CD4-positive, alpha-beta memory T cell (primary cell): ENCODE measurements at regions of chr5 and their contacts with region 1.

Region 1: DNA sequence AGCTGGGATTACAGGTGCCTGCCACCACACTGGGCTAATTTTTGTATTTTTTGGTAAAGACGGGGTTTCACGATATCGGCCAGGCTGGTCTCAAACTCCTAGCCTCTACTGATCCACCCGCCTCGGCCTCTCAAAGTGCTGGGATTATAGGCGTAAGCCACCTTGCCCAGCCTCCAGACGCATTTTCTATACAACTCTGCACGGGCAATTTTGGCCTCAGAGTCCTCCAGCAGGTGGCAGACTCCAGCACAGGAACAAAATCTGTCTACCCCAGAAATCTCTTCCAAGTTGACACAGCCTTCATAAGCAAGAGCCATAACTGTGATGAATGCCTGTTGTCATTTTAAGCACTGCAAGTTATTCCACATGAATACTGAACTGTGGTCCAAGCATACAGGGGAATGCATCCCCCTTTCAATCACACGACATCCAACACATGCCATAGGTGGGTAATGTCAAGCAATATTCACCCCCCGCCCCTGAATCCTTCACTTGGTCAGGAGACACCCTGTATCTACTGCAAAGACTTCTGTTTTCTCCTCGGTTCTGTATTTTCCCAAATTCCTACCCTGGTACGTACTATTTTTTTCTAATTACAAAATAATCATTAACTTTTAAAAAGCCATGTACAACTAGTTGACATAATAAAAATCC is 50.8 kb downstream of the ALDH7A1 start:
- DNase-seq: peak in 4 of 5 donors; percentile 7 to 22 (median 20)
- H3K4me3 ChIP-seq: no peak overlapping the region
- H3K4me3 Mint-ChIP-seq: no peak overlapping the region
- H3K27ac ChIP-seq: no peak overlapping the region
- H3K27ac Mint-ChIP-seq: no peak overlapping the region
- H3K4me1 ChIP-seq: no peaks in the 10 kb centered on the region
- H3K4me1 Mint-ChIP-seq: no peaks in the 10 kb centered on the region
- H3K27me3 ChIP-seq: no peaks in the 10 kb centered on the region
- H3K27me3 Mint-ChIP-seq: peaks cover 1 to 3% of the 10 kb centered on the region in 2 donors

Region 2: DNA sequence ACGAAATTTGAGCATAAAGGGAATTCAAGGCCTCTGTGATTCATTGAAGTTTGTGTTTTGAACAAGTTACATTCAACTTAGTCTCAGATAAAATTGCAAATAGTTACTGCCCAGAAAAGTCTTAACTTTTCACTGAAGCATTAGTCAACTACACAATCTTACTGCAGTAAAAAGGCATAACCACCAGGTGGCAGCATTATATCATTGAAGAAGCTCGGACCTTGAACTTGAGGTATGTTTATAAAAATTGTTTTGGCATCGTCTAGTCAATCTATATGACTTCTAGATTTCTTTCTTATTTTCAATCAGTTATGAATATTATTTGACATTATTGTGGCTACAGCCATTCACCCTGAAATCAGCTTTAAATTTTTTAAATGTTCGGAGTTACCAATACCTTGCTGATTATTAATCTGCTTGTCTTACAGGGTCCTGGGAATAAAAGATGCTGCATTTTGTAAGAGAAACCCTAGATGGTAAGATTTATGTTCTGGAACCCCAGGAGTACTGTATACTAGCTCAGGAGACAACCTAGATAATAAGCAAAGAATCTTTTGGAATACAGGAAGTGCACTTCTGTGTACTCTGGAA is 204.9 kb before region 1 on chr5:
- CTCF ChIA-PET with region 1: interaction called, 145 read pairs
- POLR2A ChIA-PET with region 1: no interaction called
- intact Hi-C with region 1: loop called (anchors 1 kb)
- DNase-seq: peak; percentile 56 to 66 (median 58)
- H3K4me3 ChIP-seq: no peak overlapping the region
- H3K4me3 Mint-ChIP-seq: no peak overlapping the region
- H3K27ac ChIP-seq: no peak overlapping the region
- H3K27ac Mint-ChIP-seq: no peak overlapping the region
- H3K4me1 ChIP-seq: no peaks in the 10 kb centered on the region
- H3K4me1 Mint-ChIP-seq: no peaks in the 10 kb centered on the region
- H3K27me3 ChIP-seq: no peaks in the 10 kb centered on the region
- H3K27me3 Mint-ChIP-seq: peaks cover 9 to 21% of the 10 kb centered on the region in 2 donors

Region 3: DNA sequence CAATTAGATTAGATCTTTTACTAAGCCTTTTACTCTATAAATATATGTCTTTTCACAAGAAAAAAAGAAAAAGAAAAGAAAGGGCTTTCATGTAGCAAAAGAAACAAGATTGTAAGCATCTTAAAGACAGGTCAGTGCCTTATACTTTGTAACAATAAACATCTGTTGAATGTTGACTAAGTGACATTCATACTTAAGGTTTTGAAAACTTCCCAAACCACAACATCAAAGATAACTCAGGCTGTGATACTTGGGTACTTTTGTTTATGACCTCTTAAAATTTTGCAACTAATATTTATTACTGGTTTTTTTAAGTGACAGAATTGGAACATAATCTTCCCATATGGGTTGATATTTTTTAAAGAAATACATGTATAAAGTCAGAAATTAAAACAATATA is 113.6 kb before region 1 on chr5:
- CTCF ChIA-PET with region 1: no interaction called
- POLR2A ChIA-PET with region 1: no interaction called
- intact Hi-C with region 1: no loop called
- DNase-seq: no peak
- H3K4me3 ChIP-seq: no peak overlapping the region
- H3K4me3 Mint-ChIP-seq: no peak overlapping the region
- H3K27ac ChIP-seq: no peak overlapping the region
- H3K27ac Mint-ChIP-seq: no peak overlapping the region
- H3K4me1 ChIP-seq: no peaks in the 10 kb centered on the region
- H3K4me1 Mint-ChIP-seq: peaks cover 5 to 9% (median 8%) of the 10 kb centered on the region in 4 donors
- H3K27me3 ChIP-seq: no peaks in the 10 kb centered on the region
- H3K27me3 Mint-ChIP-seq: no peaks in the 10 kb centered on the region

Region 4: DNA sequence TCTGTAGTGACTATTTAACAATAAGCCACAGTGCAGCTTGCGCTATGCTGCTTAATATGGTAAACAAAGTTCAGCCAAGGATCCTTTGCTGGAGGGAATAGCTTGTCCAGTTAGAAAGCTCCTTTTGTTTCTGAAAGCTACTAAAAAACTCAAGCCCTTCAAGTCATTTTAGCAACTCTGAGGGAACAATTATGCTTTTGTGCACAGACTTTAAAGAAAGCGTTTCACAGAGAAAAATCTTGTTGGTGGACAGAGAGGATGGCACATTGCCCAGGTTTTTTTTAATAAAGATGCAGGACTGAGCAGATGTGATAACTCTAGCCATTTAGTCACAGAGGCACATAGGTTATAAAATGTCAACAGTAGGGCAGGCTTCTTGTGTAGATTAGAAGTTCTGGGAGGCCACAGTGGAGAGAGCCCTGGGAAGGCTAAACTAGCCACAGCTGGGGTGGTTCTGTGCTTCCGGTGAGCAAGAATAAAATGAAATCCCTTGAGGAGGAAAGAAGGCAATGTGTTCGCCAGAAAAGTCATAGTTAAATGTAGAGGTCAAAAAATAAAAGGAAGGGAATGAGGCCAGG is 12.6 kb before region 1 on chr5:
- CTCF ChIA-PET with region 1: interaction called, 10 read pairs
- POLR2A ChIA-PET with region 1: no interaction called
- intact Hi-C with region 1: no loop called
- DNase-seq: no peak
- H3K4me3 ChIP-seq: no peak overlapping the region
- H3K4me3 Mint-ChIP-seq: no peak overlapping the region
- H3K27ac ChIP-seq: no peak overlapping the region
- H3K27ac Mint-ChIP-seq: peak overlapping the region in 1 of 7 donors; percentile 63
- H3K4me1 ChIP-seq: no peaks in the 10 kb centered on the region
- H3K4me1 Mint-ChIP-seq: no peaks in the 10 kb centered on the region
- H3K27me3 ChIP-seq: no peaks in the 10 kb centered on the region
- H3K27me3 Mint-ChIP-seq: no peaks in the 10 kb centered on the region

Region 5: DNA sequence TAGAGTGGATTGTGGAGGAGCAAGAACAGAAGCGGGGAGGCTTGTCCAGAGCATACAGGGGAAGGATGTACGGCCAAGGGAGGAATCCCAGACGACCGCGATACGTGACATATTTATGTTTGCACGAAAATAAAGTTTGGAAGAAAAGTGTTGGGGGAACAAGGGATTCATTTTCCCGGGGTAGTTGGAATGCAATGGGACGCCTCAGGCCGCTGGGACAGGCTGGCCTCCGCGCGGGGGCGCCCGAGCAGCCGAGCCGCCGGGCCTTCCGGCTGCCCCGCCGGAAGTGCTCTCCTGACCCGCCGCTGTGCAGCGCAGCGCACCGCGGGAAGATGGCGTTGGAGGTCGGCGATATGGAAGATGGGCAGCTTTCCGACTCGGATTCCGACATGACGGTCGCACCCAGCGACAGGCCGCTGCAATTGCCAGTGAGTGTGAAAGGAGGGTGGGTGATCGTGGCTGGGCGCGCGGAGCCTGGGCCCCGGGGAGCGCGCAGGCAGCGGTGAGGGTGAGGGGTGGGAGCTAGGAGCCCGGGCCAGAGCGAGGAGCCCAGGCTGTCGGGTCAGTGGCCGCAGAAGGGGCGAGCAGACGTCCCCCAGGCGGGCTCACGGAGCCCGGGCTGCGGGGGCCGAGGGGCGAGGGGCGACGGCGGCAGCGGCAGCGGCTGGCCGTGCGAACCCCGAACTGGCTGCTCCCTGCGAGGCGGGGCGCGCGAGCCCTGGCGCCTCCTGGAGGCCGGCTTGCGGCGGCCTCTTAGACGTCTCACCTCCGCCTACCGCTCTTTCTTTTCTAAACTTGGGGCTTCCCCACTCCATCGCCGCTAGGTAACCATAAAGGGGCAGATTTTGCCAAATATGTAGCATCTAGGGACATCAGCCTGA is 56.7 kb after region 1 on chr5 and contains the start of gene PHAX:
- CTCF ChIA-PET with region 1: interaction called, 5 read pairs
- POLR2A ChIA-PET with region 1: no interaction called
- intact Hi-C with region 1: loop called (anchors 1 kb)
- DNase-seq: peak; percentile 68 to 75 (median 74)
- H3K4me3 ChIP-seq: peak within 1 kb of the TSS; percentile 50 to 95
- H3K4me3 Mint-ChIP-seq: peak within 1 kb of the TSS; percentile 96 to 99 (median 97)
- H3K27ac ChIP-seq: peak within 1 kb of the TSS; percentile 80
- H3K27ac Mint-ChIP-seq: peak within 1 kb of the TSS; percentile 84 to 99 (median 96)
- H3K4me1 ChIP-seq: peaks cover 31% of the 10 kb centered on the region
- H3K4me1 Mint-ChIP-seq: peaks cover 22 to 46% (median 34%) of the 10 kb centered on the region in 4 donors
- H3K27me3 ChIP-seq: no peaks in the 10 kb centered on the region
- H3K27me3 Mint-ChIP-seq: no peaks in the 10 kb centered on the region
- total RNA-seq, gene PHAX: 41.2 to 43.4 TPM